HCT116 (cell line): ENCODE measurements at regions of chr12 and their contacts with region 1.

Region 1: GRCh38 chr12:121467115-121467793 is 67.3 kb downstream of the RNF34 start:
- DNase-seq: peak; percentile 69
- ATAC-seq: peak; percentile 95
- H3K4me3 ChIP-seq: peak overlapping the region; percentile 50 to 62
- H3K27ac ChIP-seq: peak overlapping the region; percentile 78
- H3K4me1 ChIP-seq: peaks cover 9 to 39% of the 10 kb centered on the region in 2 experiments; a peak in 3 of 4 replicates
- H3K27me3 ChIP-seq: no peaks in the 10 kb centered on the region
- CTCF ChIP-seq: no peak
- POLR2A ChIP-seq: peak; percentile 51
- RAD21 ChIP-seq: no peak

Region 2: GRCh38 chr12:121274036-121274763 is 193.1 kb before region 1 on chr12:
- CTCF ChIA-PET with region 1: no interaction called
- POLR2A ChIA-PET with region 1: no interaction called
- RAD21 ChIA-PET with region 1: no interaction called
- intact Hi-C with region 1: no loop called
- DNase-seq: no peak
- ATAC-seq: no peak
- H3K4me3 ChIP-seq: no peak overlapping the region
- H3K27ac ChIP-seq: no peak overlapping the region
- H3K4me1 ChIP-seq: peaks cover 0 to 8% of the 10 kb centered on the region in 2 experiments; a peak in 1 of 4 replicates
- H3K27me3 ChIP-seq: no peaks in the 10 kb centered on the region
- CTCF ChIP-seq: no peak
- POLR2A ChIP-seq: no peak
- RAD21 ChIP-seq: no peak

Region 3: GRCh38 chr12:121452340-121452984 is 14.8 kb before region 1 on chr12:
- CTCF ChIA-PET with region 1: no interaction called
- POLR2A ChIA-PET with region 1: no interaction called
- RAD21 ChIA-PET with region 1: no interaction called
- intact Hi-C with region 1: no loop called
- DNase-seq: no peak
- ATAC-seq: no peak
- H3K4me3 ChIP-seq: no peak overlapping the region
- H3K27ac ChIP-seq: no peak overlapping the region
- H3K4me1 ChIP-seq: no peaks in the 10 kb centered on the region
- H3K27me3 ChIP-seq: no peaks in the 10 kb centered on the region
- CTCF ChIP-seq: no peak
- POLR2A ChIP-seq: no peak
- RAD21 ChIP-seq: no peak

Region 4: GRCh38 chr12:121483949-121484348 is 16.7 kb after region 1 on chr12:
- CTCF ChIA-PET with region 1: interaction called, 20 read pairs
- POLR2A ChIA-PET with region 1: no interaction called
- RAD21 ChIA-PET with region 1: no interaction called
- intact Hi-C with region 1: no loop called
- DNase-seq: no peak
- ATAC-seq: no peak
- H3K4me3 ChIP-seq: no peak overlapping the region
- H3K27ac ChIP-seq: no peak overlapping the region
- H3K4me1 ChIP-seq: peaks cover 0 to 12% of the 10 kb centered on the region in 2 experiments; a peak in 2 of 4 replicates
- H3K27me3 ChIP-seq: no peaks in the 10 kb centered on the region
- CTCF ChIP-seq: no peak
- POLR2A ChIP-seq: no peak
- RAD21 ChIP-seq: no peak